ENCODE measurements at regions of chr12 and their contacts with region 1.

Region 1: DNA sequence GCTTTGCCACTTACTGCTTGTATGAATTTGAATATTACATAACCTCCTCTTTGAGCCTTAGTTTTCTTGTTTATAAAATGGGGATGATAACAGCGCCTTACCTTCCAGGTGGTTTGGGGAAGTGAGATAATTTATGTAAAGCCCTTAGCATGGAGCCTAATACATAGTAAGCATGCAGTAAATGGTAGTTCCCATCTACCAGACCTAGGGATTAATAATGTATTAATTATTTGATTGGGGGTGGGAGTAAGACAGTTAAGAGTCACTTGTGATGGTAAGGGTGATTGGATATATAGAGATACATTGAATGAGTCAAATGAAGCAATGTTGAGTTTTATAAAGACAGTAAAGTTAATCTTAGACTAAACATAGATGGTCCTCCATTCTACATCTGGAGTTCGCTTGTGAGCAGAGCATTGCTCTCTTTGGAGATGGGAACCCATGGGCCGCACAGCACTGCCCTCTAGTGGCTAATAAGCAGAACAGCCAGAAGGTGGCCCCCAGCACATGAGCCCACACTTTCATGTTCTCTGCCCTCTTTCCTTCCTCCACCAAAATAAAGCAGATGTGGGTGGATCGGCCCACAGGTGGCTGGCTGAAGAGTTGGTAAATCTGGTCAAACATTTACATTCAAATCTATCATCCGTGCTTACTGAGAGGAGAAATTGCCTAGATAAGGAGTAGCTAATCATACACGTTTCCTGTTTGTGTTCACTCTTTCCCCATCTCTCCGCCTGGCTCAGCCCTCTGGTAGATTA is 26.5 kb upstream of the TAMALIN start:
- DNase-seq: peak; percentile 40 to 60
- ATAC-seq: peak; percentile 86 to 95 (median 92)
- H3K4me3 ChIP-seq: no peak overlapping the region
- H3K27ac ChIP-seq: no peak overlapping the region
- H3K4me1 ChIP-seq: peaks cover 0 to 40% (median 0%) of the 10 kb centered on the region in 9 donors
- H3K27me3 ChIP-seq: no peaks in the 10 kb centered on the region
- CTCF ChIP-seq: peak; percentile 95 to 99 (median 97)

Region 2: GRCh38 chr12:51726931-51727330 is 253.3 kb before region 1 on chr12:
- intact Hi-C with region 1: no loop called
- DNase-seq: no peak
- ATAC-seq: no peak
- H3K4me3 ChIP-seq: no peak overlapping the region
- H3K27ac ChIP-seq: no peak overlapping the region
- H3K4me1 ChIP-seq: peaks cover 0 to under 1% (median 0%) of the 10 kb centered on the region in 9 donors
- H3K27me3 ChIP-seq: peaks cover 0 to 23% (median 17%) of the 10 kb centered on the region in 7 donors
- CTCF ChIP-seq: no peak

Region 3: DNA sequence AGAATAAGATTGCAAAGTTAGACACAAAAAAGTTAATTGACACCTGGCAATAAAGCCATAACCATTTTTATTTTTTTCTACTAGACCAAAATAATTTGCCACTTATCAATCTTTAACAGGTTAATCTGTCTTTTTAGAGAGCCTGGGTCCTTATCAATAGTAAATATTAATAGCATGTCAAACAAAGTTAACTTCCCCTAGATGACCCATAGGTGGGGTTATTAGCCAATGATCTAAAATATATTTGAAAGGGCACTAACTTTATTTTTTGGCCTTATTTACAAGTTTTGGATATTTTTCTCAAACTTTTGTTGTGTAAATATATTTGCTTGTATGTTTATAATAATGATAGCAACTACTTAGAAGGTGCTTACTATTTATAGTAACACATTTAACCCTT is 88.4 kb before region 1 on chr12:
- intact Hi-C with region 1: loop called (anchors 1 to 5 kb)
- DNase-seq: no peak
- ATAC-seq: no peak
- H3K4me3 ChIP-seq: no peak overlapping the region
- H3K27ac ChIP-seq: no peak overlapping the region
- H3K4me1 ChIP-seq: peaks cover 1 to 34% (median 22%) of the 10 kb centered on the region in 9 donors
- H3K27me3 ChIP-seq: peaks cover 0 to 16% (median 0%) of the 10 kb centered on the region in 7 donors
- CTCF ChIP-seq: peak in 8 of 9 donors; percentile 16 to 61 (median 48)

Region 4: GRCh38 chr12:51898937-51899336 is 81.3 kb before region 1 on chr12:
- intact Hi-C with region 1: loop called in 9 of 10 experiments (anchors 1 to 5 kb)
- DNase-seq: no peak
- ATAC-seq: peak in 1 of 8 donors; percentile 21
- H3K4me3 ChIP-seq: no peak overlapping the region
- H3K27ac ChIP-seq: peak overlapping the region in 3 of 10 donors; percentile 5 to 71 (median 41)
- H3K4me1 ChIP-seq: peaks cover 4 to 50% (median 40%) of the 10 kb centered on the region in 9 donors
- H3K27me3 ChIP-seq: no peaks in the 10 kb centered on the region
- CTCF ChIP-seq: no peak

Region 5: GRCh38 chr12:51905471-51906429 is 74.5 kb before region 1 on chr12:
- intact Hi-C with region 1: loop called in 1 of 10 experiments (anchors 5 kb)
- DNase-seq: peak; percentile 72 to 89
- ATAC-seq: peak; percentile 71 to 84 (median 80)
- H3K4me3 ChIP-seq: peak overlapping the region in 8 of 10 donors; percentile 58 to 78 (median 70)
- H3K27ac ChIP-seq: peak overlapping the region; percentile 90 to 98 (median 94)
- H3K4me1 ChIP-seq: peaks cover 27 to 64% (median 61%) of the 10 kb centered on the region in 9 donors
- H3K27me3 ChIP-seq: peaks cover 0 to 25% (median 11%) of the 10 kb centered on the region in 7 donors
- CTCF ChIP-seq: no peak

Region 6: GRCh38 chr12:51938726-51939125 is 41.5 kb before region 1 on chr12:
- intact Hi-C with region 1: loop called in 1 of 10 experiments (anchors 5 kb)
- DNase-seq: no peak
- ATAC-seq: no peak
- H3K4me3 ChIP-seq: no peak overlapping the region
- H3K27ac ChIP-seq: no peak overlapping the region
- H3K4me1 ChIP-seq: peaks cover 3 to 16% (median 10%) of the 10 kb centered on the region in 9 donors
- H3K27me3 ChIP-seq: no peaks in the 10 kb centered on the region
- CTCF ChIP-seq: no peak

Measured in heart right ventricle (tissue), 16 donors.